HepG2 (cell line): ENCODE measurements at regions of chrX and their contacts with region 1.

Region 1: GRCh38 chrX:24426391-24426790 is 38.7 kb upstream of the PDK3 start:
- DNase-seq: peak; percentile 29
- ATAC-seq: peak; percentile 87
- H3K4me3 ChIP-seq: peak overlapping the region; percentile 57 to 70 (median 61)
- H3K27ac ChIP-seq: no peak overlapping the region
- H3K4me1 ChIP-seq: peaks cover 19% of the 10 kb centered on the region
- H3K27me3 ChIP-seq: no peaks in the 10 kb centered on the region
- CTCF ChIP-seq: no peak
- EP300 ChIP-seq: no peak
- POLR2A ChIP-seq: no peak
- RAD21 ChIP-seq: no peak

Region 2: DNA sequence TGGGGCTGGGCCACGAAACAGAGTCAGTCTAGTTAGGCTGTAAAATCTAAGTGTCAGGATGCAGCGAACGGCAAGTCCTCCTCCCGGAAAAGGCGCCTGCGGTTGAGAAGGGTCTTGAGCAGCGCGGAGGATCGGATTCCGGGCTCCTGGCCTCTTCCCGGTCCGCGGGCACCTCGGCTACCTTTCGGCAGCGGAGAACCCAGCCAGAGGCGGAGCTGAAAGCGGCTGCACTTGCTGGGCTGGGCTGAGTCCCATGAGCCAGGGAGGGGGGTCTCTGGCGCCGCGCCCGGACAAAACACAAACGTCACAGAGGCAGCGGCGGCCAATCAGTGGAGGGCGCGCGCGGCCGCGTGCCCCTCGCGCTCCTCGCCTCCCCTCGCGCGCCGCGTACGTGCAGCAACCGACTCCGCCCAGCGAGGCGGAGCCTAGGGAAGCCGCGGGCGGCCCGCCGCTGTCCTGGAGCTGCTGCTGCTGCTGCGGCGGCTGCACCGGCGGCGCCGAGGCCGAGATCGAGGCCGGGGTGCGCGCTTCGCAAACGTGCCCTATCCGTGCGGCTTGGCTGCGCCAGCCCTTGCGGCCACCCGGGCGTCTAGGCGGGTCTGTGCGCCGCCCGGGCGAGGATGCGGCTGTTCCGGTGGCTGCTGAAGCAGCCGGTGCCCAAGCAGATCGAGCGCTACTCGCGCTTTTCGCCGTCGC is 38.6 kb after region 1 on chrX and contains the start of gene PDK3:
- CTCF ChIA-PET with region 1: no interaction called
- POLR2A ChIA-PET with region 1: no interaction called
- in situ Hi-C with region 1: no loop called
- intact Hi-C with region 1: loop called (anchors 2 kb)
- DNase-seq: peak; percentile 73
- ATAC-seq: peak; percentile 98
- H3K4me3 ChIP-seq: peak within 1 kb of the TSS; percentile 69 to 80 (median 74)
- H3K27ac ChIP-seq: peak within 1 kb of the TSS; percentile 55
- H3K4me1 ChIP-seq: peaks cover 27% of the 10 kb centered on the region
- H3K27me3 ChIP-seq: no peaks in the 10 kb centered on the region
- CTCF ChIP-seq: no peak
- EP300 ChIP-seq: no peak
- POLR2A ChIP-seq: peak; percentile 50 to 75; a peak in 3 of 4 replicates
- RAD21 ChIP-seq: no peak
- total RNA-seq, gene PDK3: 9.1 and 13.3 TPM in 2 replicates

Region 3: GRCh38 chrX:24479924-24480323 is 53.5 kb after region 1 on chrX:
- CTCF ChIA-PET with region 1: no interaction called
- POLR2A ChIA-PET with region 1: no interaction called
- in situ Hi-C with region 1: no loop called
- intact Hi-C with region 1: no loop called
- DNase-seq: no peak
- ATAC-seq: no peak
- H3K4me3 ChIP-seq: no peak overlapping the region
- H3K27ac ChIP-seq: no peak overlapping the region
- H3K4me1 ChIP-seq: no peaks in the 10 kb centered on the region
- H3K27me3 ChIP-seq: no peaks in the 10 kb centered on the region
- CTCF ChIP-seq: no peak
- EP300 ChIP-seq: no peak
- POLR2A ChIP-seq: no peak
- RAD21 ChIP-seq: no peak

Region 4: GRCh38 chrX:24498975-24499374 is 72.6 kb after region 1 on chrX:
- CTCF ChIA-PET with region 1: no interaction called
- POLR2A ChIA-PET with region 1: no interaction called
- in situ Hi-C with region 1: no loop called
- intact Hi-C with region 1: loop called (anchors 2 kb)
- DNase-seq: no peak
- ATAC-seq: no peak
- H3K4me3 ChIP-seq: no peak overlapping the region
- H3K27ac ChIP-seq: no peak overlapping the region
- H3K4me1 ChIP-seq: peaks cover 16% of the 10 kb centered on the region
- H3K27me3 ChIP-seq: no peaks in the 10 kb centered on the region
- CTCF ChIP-seq: no peak
- EP300 ChIP-seq: no peak
- POLR2A ChIP-seq: no peak
- RAD21 ChIP-seq: no peak

Region 5: DNA sequence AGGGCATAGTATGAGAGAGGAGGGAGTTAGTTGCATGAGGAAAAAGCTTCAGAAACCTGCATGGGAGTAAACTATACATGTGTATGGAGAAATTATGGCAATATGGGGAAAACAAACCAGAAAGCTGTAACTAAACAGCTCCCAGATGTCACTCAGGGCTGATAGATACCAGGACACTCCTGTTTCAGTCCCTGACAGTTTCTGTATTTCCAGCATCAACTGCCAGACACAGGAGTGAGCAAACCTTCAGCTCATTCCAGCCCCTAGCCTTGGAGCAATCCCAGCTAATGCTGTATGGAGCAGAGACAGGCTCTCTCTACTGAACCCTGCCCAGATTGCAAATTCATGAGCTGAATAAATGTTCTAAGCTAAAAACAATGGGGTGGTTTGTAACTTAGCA is 1328.8 kb after region 1 on chrX:
- CTCF ChIA-PET with region 1: no interaction called
- POLR2A ChIA-PET with region 1: no interaction called
- in situ Hi-C with region 1: no loop called
- intact Hi-C with region 1: no loop called
- DNase-seq: no peak
- ATAC-seq: no peak
- H3K4me3 ChIP-seq: no peak overlapping the region
- H3K27ac ChIP-seq: no peak overlapping the region
- H3K4me1 ChIP-seq: no peaks in the 10 kb centered on the region
- H3K27me3 ChIP-seq: no peaks in the 10 kb centered on the region
- CTCF ChIP-seq: no peak
- EP300 ChIP-seq: no peak
- POLR2A ChIP-seq: no peak
- RAD21 ChIP-seq: no peak